CD4-positive, alpha-beta memory T cell (primary cell): ENCODE measurements at regions of chr1 and their contacts with region 1.

Region 1: DNA sequence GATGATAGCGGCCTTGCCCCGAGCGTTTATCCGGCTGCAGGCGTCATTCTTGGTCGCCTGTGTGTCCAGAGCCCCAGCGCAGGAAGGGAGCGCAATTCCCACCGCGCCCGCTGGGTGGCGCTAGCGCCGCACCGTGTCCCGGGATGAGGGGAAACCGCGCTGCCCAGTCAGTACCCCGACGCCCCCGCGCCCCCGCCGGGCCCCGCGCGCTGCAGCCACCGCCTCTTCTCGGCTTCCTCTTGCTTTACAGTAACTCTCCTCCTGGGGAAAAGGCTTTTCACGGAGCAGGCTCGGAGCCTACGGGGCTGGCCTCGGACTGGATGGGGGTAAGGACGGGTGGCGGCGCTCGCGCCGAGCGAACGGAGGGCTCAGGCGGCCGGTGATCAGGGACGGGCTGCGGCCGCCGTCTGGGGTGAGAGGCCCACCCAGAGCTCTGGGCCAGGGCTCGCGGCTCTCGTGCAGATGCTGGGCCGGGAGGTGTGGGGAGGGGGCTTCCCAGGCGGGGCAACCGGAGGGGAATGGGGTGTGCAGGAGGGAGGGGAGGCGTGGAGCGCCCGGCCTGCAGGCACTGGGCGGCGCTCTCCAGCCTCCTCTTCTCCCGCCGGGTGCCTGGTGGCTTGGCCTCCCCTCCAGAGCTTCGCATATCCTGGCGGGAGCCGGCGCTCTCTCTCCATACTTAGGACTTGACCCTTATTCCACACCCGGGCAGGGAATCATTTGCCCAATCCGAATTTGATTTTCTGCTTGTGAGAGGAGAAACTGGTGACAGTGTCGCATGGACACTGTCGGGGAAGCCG is 29.8 kb downstream of the TEX35 start:
- DNase-seq: peak; percentile 73 to 88 (median 81)
- H3K4me3 ChIP-seq: peak overlapping the region; percentile 91 to 99
- H3K4me3 Mint-ChIP-seq: peak overlapping the region; percentile 92 to 95 (median 94)
- H3K27ac ChIP-seq: peak overlapping the region; percentile 39
- H3K27ac Mint-ChIP-seq: peak overlapping the region in 6 of 7 donors; percentile 65 to 90 (median 83)
- H3K4me1 ChIP-seq: peaks cover 16% of the 10 kb centered on the region
- H3K4me1 Mint-ChIP-seq: peaks cover 9 to 27% (median 11%) of the 10 kb centered on the region in 4 donors
- H3K27me3 ChIP-seq: no peaks in the 10 kb centered on the region
- H3K27me3 Mint-ChIP-seq: no peaks in the 10 kb centered on the region

Region 2: DNA sequence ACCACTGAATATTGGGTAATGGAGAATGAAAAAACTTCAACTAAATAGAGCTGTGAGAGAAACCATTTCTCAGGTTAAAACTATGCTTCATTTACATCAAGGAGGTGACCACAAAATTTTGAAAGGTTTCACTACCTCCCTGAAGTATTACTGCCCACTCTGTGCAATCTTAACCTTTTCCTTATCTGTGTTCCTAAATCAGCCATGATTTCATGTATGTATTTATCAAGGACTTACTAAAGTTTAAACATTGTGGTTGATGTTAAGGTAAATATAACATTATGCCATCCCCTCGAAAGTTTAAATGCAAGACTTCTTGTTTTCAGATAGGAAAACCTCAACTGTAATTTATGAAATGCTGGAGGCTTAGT is 130.4 kb before region 1 on chr1:
- CTCF ChIA-PET with region 1: no interaction called
- POLR2A ChIA-PET with region 1: no interaction called
- intact Hi-C with region 1: no loop called
- DNase-seq: no peak
- H3K4me3 ChIP-seq: no peak overlapping the region
- H3K4me3 Mint-ChIP-seq: no peak overlapping the region
- H3K27ac ChIP-seq: no peak overlapping the region
- H3K27ac Mint-ChIP-seq: no peak overlapping the region
- H3K4me1 ChIP-seq: no peaks in the 10 kb centered on the region
- H3K4me1 Mint-ChIP-seq: no peaks in the 10 kb centered on the region
- H3K27me3 ChIP-seq: no peaks in the 10 kb centered on the region
- H3K27me3 Mint-ChIP-seq: peaks cover 2 to 4% of the 10 kb centered on the region in 2 donors

Region 3: GRCh38 chr1:178438432-178438831 is 104.3 kb before region 1 on chr1:
- CTCF ChIA-PET with region 1: no interaction called
- POLR2A ChIA-PET with region 1: no interaction called
- intact Hi-C with region 1: no loop called
- DNase-seq: no peak
- H3K4me3 ChIP-seq: no peak overlapping the region
- H3K4me3 Mint-ChIP-seq: no peak overlapping the region
- H3K27ac ChIP-seq: no peak overlapping the region
- H3K27ac Mint-ChIP-seq: no peak overlapping the region
- H3K4me1 ChIP-seq: no peaks in the 10 kb centered on the region
- H3K4me1 Mint-ChIP-seq: no peaks in the 10 kb centered on the region
- H3K27me3 ChIP-seq: no peaks in the 10 kb centered on the region
- H3K27me3 Mint-ChIP-seq: peaks cover 0 to 6% of the 10 kb centered on the region in 2 donors

Region 4: DNA sequence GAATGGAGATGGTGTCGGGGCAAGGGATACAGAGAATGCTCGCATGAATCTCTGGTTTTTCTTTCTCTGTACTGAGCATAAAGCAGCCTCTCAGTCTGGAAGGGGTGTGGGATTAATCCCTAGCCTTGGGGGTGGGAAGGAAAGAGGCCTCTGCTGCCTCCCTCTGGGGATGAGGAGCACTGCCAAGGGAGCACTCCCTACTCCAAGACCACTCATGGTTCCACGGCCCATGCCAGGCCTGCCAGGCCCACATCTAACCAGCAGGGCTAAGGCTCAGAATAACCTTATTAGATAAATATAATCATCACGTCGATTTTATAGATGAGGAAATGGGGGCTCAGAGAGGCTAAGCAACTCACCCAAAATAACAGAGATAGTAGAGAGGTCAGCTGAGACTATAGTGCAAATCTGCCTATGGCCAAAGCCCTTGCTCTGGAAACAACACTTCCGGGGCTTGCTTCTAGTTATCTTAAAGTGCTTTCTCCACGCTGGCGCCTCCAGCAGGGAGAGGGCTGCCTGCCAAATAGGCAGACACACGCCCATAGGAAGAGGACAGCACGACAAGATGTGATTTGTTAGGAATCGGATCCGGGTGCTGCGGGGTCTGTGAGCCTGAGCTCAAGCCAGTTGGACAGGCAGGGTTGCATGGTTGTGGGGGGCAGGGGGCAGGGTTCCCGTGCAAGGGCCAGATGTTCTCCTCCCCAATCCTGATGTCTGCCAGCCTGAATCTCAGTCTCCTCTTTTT is 29.3 kb before region 1 on chr1:
- CTCF ChIA-PET with region 1: no interaction called
- POLR2A ChIA-PET with region 1: no interaction called
- intact Hi-C with region 1: no loop called
- DNase-seq: no peak
- H3K4me3 ChIP-seq: no peak overlapping the region
- H3K4me3 Mint-ChIP-seq: no peak overlapping the region
- H3K27ac ChIP-seq: no peak overlapping the region
- H3K27ac Mint-ChIP-seq: no peak overlapping the region
- H3K4me1 ChIP-seq: no peaks in the 10 kb centered on the region
- H3K4me1 Mint-ChIP-seq: no peaks in the 10 kb centered on the region
- H3K27me3 ChIP-seq: no peaks in the 10 kb centered on the region
- H3K27me3 Mint-ChIP-seq: peaks cover 0 to 3% of the 10 kb centered on the region in 2 donors

Region 5: GRCh38 chr1:178532392-178532791 is 10.4 kb before region 1 on chr1:
- CTCF ChIA-PET with region 1: interaction called, 44 read pairs
- POLR2A ChIA-PET with region 1: interaction called, 3 read pairs
- intact Hi-C with region 1: loop called (anchors 1 kb)
- DNase-seq: peak; percentile 56 to 64 (median 60)
- H3K4me3 ChIP-seq: no peak overlapping the region
- H3K4me3 Mint-ChIP-seq: peak overlapping the region in 1 of 8 donors; percentile 16
- H3K27ac ChIP-seq: no peak overlapping the region
- H3K27ac Mint-ChIP-seq: peak overlapping the region in 3 of 7 donors; percentile 18 to 53 (median 43)
- H3K4me1 ChIP-seq: peaks cover 6% of the 10 kb centered on the region
- H3K4me1 Mint-ChIP-seq: peaks cover 0 to 6% (median 3%) of the 10 kb centered on the region in 4 donors
- H3K27me3 ChIP-seq: no peaks in the 10 kb centered on the region
- H3K27me3 Mint-ChIP-seq: peaks cover 0 to 1% of the 10 kb centered on the region in 2 donors

Region 6: DNA sequence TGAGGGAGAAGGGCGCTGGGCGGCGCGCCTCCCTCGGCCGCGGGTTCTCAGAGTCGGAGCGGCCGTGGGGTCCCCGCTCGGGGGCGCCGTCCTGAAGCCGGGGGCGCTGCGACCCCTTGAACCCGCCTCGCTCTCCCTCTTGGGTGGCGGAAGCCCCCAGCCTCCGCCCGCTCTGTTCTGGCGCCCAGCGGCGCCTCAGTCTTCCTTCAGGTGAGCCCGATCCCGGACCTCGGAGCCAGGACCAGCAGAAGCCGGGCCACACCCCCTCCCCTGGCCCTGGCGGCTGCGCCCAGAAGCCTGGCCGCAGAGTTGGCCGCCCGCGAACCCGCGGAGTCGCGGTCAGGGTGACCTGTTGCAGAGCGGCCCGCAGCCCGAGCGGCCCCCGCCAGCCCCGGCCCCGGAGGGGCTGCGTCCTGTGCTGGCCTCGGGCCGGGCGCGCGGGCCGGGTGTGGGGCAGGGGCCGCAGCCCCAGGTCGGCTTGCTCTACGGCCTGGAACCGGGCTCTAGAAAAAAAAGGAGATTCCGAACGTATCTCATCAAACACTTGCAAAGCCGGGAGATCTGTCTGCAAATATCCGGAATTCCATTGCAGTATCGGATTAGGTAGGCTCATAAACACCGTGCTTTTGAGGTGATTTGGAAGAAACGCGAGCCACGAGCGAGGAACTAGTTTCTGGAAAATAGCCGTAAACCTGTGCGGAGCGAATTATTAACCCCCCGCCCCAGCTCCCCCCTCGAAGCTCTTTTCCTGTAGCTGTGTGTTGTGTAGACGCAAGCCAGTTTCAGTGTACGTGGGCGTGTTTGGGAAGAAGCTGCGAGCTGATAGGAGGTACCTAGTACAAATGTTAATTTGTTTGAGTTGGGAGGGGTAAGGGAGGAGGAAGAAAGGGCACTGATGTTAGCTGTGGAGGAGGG is 183.1 kb after region 1 on chr1:
- CTCF ChIA-PET with region 1: interaction called, 4 read pairs
- POLR2A ChIA-PET with region 1: interaction called, 4 read pairs
- intact Hi-C with region 1: loop called (anchors 2 kb)
- DNase-seq: peak; percentile 48 to 79 (median 64)
- H3K4me3 ChIP-seq: peak overlapping the region; percentile 45 to 63
- H3K4me3 Mint-ChIP-seq: peak overlapping the region; percentile 74 to 92 (median 86)
- H3K27ac ChIP-seq: peak overlapping the region; percentile 47
- H3K27ac Mint-ChIP-seq: peak overlapping the region; percentile 75 to 91 (median 87)
- H3K4me1 ChIP-seq: peaks cover 14% of the 10 kb centered on the region
- H3K4me1 Mint-ChIP-seq: peaks cover 13 to 27% (median 16%) of the 10 kb centered on the region in 4 donors
- H3K27me3 ChIP-seq: no peaks in the 10 kb centered on the region
- H3K27me3 Mint-ChIP-seq: peaks cover 3 to 9% of the 10 kb centered on the region in 2 donors

Region 7: GRCh38 chr1:178752891-178753290 is 210.1 kb after region 1 on chr1:
- CTCF ChIA-PET with region 1: interaction called, 32 read pairs
- POLR2A ChIA-PET with region 1: interaction called, 4 read pairs
- intact Hi-C with region 1: loop called (anchors 1 kb)
- DNase-seq: no peak
- H3K4me3 ChIP-seq: no peak overlapping the region
- H3K4me3 Mint-ChIP-seq: no peak overlapping the region
- H3K27ac ChIP-seq: no peak overlapping the region
- H3K27ac Mint-ChIP-seq: peak overlapping the region in 1 of 7 donors; percentile 54
- H3K4me1 ChIP-seq: no peaks in the 10 kb centered on the region
- H3K4me1 Mint-ChIP-seq: peaks cover 0 to 3% (median under 1%) of the 10 kb centered on the region in 4 donors
- H3K27me3 ChIP-seq: no peaks in the 10 kb centered on the region
- H3K27me3 Mint-ChIP-seq: no peaks in the 10 kb centered on the region